ENCODE measurements at regions of chr1 and their contacts with region 1.

Region 1: GRCh38 chr1:5745776-5746610 is 246.2 kb downstream of the NPHP4 start:
- DNase-seq: peak; percentile 71
- H3K4me3 ChIP-seq: no peak overlapping the region
- H3K27ac ChIP-seq: no peak overlapping the region
- H3K4me1 ChIP-seq: no peaks in the 10 kb centered on the region
- H3K27me3 ChIP-seq: peaks cover 0 to 50% (median 11%) of the 10 kb centered on the region in 3 donors
- CTCF ChIP-seq: peak; percentile 36 to 92 (median 80)
- EP300 ChIP-seq: no peak
- POLR2A ChIP-seq: no peak

Region 2: DNA sequence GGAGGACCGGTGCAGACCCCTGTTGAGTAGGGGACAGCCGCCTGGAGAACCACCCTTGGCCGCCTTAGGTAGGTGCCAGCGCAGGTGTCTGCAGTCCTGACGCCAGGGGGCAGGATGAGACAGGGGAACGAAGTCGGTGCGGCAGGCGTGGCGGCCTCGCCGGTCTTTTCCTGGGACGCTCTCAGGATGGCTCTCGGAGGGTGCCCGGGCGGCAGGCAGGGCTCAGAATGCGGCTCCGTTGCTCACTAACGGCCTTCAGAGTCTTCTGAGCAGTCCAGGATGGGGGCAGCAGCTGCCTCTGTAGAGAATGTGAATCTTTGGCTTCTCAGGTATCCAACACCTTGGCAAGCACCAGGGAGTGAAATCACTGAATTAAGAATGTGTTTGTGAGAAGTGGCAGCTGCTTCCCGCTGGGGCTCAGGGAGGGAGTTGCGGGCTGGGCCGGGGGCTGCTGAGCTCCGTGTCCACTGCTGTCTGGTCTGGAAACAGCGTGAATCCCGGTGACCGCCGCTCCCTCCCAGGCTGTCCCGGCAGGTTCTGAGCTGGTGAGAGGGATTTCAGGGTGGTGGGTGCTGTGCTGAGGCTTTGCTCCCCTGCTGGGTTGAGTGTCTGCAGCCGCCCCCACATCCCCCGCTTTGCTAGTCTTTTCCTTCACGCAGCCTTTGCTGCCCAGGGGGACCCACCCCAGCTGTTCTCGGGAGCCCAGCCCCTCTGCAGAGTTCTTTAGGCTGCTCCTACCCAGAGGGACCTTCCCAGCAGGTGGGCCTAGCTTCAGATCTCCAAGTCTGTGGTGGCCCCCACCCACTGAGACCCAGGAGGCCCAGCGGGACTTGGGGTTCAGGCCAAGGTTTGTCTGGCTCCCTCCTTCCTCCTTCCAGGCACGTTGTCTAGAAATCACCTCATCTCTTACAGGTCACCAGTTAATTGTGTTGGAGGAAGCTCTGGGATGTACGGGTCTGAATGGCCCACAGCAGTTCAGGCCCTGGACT is 1834.8 kb before region 1 on chr1:
- intact Hi-C with region 1: loop called (anchors 5 kb)
- DNase-seq: no peak
- H3K4me3 ChIP-seq: no peak overlapping the region
- H3K27ac ChIP-seq: no peak overlapping the region
- H3K4me1 ChIP-seq: peaks cover 0 to 9% (median 3%) of the 10 kb centered on the region in 4 donors
- H3K27me3 ChIP-seq: peaks cover 5 to 22% (median 14%) of the 10 kb centered on the region in 3 donors
- CTCF ChIP-seq: peak; percentile 28 to 65 (median 61)
- EP300 ChIP-seq: no peak
- POLR2A ChIP-seq: no peak

Region 3: GRCh38 chr1:4652631-4653327 is 1093.2 kb before region 1 on chr1:
- intact Hi-C with region 1: loop called (anchors 10 kb)
- DNase-seq: no peak
- H3K4me3 ChIP-seq: peak overlapping the region in 1 of 4 donors; percentile 17
- H3K27ac ChIP-seq: no peak overlapping the region
- H3K4me1 ChIP-seq: peaks cover 0 to 25% (median 21%) of the 10 kb centered on the region in 4 donors
- H3K27me3 ChIP-seq: peaks cover 26 to 85% (median 45%) of the 10 kb centered on the region in 3 donors
- CTCF ChIP-seq: peak; percentile 63 to 98 (median 71)
- EP300 ChIP-seq: no peak
- POLR2A ChIP-seq: no peak

Region 4: DNA sequence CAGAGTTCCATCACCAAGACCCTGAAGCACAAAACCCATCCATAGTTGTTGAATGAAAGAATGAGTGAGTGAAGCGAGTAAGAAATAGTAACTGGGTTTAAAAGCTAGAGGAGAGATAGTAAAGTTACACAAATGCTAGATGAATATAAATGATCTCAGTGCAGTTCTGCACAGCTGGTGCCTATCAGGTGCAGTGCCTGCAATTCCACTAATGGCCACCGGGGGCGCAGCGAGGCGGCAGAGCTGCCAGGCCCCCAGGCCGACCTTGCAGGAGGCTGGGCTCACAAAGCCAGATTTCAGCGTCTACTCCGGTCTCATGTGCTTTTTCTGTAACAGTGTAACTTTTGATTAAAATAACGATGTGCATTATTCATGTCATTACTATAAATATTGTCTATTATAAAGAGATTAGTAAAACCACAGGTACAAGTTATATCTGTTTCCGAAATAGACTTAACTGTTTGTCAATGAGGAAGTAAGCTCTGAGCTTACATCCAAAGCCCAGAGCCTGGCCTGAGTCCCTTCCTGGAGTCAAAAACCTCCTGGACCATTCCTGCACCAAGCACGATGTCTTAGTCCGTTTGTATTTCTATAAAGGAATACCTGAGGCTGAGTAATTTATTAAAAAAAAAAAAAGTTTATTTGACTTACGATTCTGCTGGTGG is 231.3 kb before region 1 on chr1:
- intact Hi-C with region 1: loop called (anchors 1 kb)
- DNase-seq: no peak
- H3K4me3 ChIP-seq: no peak overlapping the region
- H3K27ac ChIP-seq: no peak overlapping the region
- H3K4me1 ChIP-seq: no peaks in the 10 kb centered on the region
- H3K27me3 ChIP-seq: peaks cover 0 to 35% (median 3%) of the 10 kb centered on the region in 3 donors
- CTCF ChIP-seq: peak; percentile 61 to 100 (median 90)
- EP300 ChIP-seq: no peak
- POLR2A ChIP-seq: no peak

Region 5: DNA sequence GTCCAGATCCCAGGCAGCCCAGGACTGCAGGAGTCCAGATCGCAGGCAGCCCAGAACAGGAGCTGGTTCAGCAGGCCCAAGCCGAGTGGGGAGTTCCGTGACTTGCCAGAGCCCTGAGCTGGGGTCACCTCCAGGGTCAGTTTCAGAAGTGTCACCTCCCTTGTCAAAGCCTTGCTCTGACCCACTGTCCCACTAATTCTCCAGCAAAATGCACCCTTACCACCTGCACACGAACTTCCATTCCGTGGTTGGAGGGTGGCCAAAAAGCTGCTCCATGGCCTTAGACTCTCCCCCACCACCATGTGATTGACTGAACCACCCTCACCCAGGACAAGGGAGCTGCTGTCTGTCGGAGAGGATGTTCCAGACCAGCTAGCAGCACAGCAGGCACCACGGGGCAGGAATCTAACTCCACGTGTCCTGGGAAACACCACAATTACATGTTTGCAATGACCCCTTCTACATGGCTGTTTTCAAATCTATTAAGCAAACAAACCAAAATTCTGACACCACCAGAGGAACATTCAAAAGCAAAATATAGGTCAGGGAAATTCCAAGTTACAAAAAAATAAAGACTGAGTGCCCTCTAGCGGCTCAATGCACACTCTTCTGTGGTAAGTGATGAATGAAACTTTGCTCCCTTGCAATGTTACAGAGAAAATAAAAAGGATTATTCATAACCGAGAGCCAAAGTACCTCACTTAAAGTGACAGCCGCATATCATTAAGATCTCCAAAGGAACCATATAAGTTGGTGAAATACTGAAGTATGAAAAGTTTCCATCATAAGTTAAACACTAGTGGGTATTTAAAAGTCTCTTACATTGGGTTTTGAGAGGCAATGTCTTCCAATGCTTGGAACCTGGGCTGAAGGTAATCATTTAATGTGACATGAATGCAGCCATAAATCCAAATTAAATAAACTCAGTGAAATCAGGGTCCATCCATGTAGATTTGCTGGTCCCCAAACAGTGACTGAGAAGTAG is 169.9 kb after region 1 on chr1:
- intact Hi-C with region 1: no loop called
- DNase-seq: no peak
- H3K4me3 ChIP-seq: no peak overlapping the region
- H3K27ac ChIP-seq: no peak overlapping the region
- H3K4me1 ChIP-seq: peaks cover 0 to 6% (median 0%) of the 10 kb centered on the region in 4 donors
- H3K27me3 ChIP-seq: no peaks in the 10 kb centered on the region
- CTCF ChIP-seq: peak in 3 of 4 experiments; percentile 25 to 57 (median 43)
- EP300 ChIP-seq: no peak
- POLR2A ChIP-seq: no peak